Right ventricle myocardium superior (tissue), 1 donor: ENCODE measurements at regions of chr1 and their contacts with region 1.

Region 1: DNA sequence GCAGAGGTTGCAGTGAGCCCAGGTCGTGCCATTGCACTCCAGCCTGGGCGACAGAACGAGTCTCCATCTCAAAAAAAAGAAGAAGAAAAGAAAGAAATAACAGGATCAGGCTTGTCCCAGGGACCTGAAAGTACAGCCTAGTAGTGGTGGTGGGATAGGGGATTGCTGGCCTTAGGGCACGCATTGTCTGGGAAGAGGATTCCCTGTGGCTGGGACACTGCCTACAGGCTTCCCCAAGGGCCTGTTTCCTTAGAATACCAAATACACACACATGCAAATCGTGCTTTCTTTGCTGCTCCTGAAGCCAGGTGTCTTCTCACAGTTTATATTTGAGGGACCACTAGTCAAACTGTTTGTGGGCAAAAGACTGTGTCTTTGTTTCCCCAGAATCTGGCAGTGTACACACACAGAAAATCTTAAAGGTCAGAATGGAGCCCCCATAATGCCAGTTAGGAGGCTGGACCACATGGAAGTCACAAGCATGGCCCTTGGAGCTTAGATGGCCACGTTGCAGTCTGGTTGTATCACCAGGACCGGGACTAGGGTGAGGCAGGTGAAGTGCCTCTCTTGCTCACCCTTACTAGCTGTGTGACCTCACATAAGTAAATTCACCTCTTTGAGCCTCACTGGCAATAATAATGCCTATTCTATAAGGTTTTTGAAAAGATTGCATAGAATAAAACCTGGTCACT is 12.7 kb upstream of the ASAP3 start:
- DNase-seq: no peak
- ATAC-seq: peak; percentile 32

Region 2: DNA sequence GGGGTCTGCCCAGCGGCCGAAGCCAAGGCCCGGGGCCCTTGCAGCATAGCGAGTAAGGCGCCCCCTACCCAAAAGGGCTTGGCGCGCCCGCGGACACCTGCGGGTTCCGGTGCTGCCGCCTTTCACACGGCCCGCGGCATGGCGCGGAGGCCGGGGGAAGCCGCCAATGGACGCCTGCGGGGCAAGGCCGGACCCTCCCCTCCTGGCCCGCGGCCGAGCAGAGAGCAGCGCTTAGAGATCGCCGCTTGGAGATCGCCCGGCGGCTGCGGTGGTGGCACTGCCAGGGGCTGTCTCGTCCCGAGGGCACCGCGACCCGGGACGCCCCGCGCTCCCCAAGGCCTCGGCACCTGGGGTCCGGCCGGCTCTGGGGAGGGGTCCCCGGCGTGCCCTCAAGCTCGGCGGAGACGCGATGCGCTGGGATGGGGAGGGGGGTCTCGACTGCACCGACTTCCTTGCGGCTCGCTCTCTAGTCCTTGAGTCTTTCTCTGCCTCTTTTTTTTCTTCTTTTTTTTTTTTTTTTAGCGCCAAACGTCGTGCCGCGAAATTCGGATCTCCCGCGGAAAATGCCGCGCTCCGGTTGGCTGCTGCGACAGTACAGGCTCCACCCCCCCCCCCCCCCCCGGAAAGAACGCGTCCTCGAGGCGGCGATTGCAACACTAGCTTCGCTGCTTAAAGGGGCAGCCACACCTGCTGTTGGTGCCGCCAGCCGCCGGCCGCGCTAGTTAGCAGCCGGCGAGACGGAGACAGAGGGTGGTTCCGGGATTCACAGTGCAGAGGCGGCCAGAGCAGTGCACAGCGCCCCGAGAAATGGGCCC is 34.3 kb after region 1 on chr1 and contains the start of gene E2F2:
- intact Hi-C with region 1: loop called (anchors 5 kb)
- DNase-seq: peak; percentile 92
- ATAC-seq: peak; percentile 91
- total RNA-seq, gene E2F2: 0.35 TPM